ENCODE measurements at regions of chr10 and their contacts with region 1.

Region 1: GRCh38 chr10:47261121-47261520 is 38.9 kb upstream of the GDF10 start:
- DNase-seq: no peak
- ATAC-seq: peak; percentile 52
- H3K4me3 Mint-ChIP-seq: peak overlapping the region; percentile 66
- H3K27ac Mint-ChIP-seq: peak overlapping the region; percentile 95
- H3K4me1 Mint-ChIP-seq: peaks cover 68% of the 10 kb centered on the region
- H3K27me3 Mint-ChIP-seq: no peaks in the 10 kb centered on the region

Region 2: GRCh38 chr10:47237316-47238260 is 23.5 kb before region 1 on chr10:
- POLR2A ChIA-PET with region 1: no interaction called
- DNase-seq: no peak
- ATAC-seq: no peak
- H3K4me3 Mint-ChIP-seq: no peak overlapping the region
- H3K27ac Mint-ChIP-seq: no peak overlapping the region
- H3K4me1 Mint-ChIP-seq: peaks cover 5% of the 10 kb centered on the region
- H3K27me3 Mint-ChIP-seq: no peaks in the 10 kb centered on the region

Region 3: DNA sequence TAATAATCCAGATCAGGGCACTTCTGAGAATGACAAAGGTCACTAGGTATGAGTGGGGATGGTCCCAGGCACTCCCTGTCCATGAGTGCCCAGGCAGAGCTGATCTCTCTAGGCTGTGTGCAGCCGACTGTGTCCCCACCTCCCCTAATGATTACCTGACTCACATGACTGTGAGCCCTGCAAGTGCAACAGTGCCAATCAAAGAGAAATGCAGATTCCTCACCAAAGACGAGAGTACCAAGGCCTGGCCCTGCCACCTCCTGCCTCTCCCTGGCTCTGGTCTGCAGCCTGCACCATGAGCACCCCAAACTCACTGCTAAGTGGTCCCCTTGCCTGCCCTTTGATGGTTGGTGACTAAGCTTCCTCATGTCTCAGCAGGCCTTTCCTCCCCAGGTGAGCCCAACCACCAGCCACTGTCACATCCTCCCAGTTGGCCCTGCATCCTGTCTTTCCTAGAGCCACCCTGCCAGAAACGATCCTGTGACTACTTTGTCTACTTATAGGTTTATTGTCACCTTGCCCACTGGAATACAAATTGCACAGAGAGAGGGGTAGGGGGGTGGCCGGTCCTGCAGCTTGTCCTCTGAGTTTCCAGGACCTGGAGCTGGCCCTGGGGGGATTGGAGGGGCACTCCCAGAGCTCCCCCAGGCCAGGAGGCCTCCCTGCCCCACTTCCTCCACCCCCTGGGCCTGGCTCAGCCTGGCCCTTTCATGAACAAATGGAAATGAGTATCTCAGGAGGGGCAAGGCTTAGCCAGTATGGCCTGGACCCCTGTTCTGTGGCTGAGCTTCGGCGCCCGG is 16.4 kb after region 1 on chr10:
- POLR2A ChIA-PET with region 1: interaction called, 18 read pairs
- DNase-seq: peak; percentile 61
- ATAC-seq: peak; percentile 99
- H3K4me3 Mint-ChIP-seq: peak overlapping the region; percentile 66
- H3K27ac Mint-ChIP-seq: peak overlapping the region; percentile 78
- H3K4me1 Mint-ChIP-seq: peaks cover 35% of the 10 kb centered on the region
- H3K27me3 Mint-ChIP-seq: peaks cover 2% of the 10 kb centered on the region

Measured in activated naive CD8-positive, alpha-beta T cell treated with anti-CD3 and anti-CD28 coated beads, Interleukin-2, amount 10 ng/mL, durations not matched to agents 7 days and 5 days (primary cell).